CD4-positive, alpha-beta T cell (primary cell): ENCODE measurements at regions of chr11 and their contacts with region 1.

Region 1: DNA sequence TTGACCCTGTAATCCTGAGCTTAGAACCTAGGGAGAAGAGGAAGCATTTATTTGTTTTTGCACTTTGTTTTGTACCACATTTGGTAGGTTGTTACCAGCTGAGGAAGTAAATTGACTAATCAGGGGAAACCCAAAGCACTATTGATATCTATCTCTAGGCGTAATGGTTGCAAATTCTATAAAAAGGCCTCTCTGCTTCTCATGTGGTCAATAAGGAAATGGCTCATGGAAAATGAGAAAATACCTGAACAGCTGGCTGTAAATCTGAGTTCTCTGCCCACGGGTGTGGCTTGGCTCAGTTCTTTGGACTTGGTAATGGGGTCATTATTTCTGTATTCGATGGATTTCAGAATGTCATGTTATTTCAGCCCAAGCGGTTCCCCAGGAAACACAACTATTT is 42.4 kb downstream of the BARX2 start:
- DNase-seq: no peak
- ATAC-seq: no peak
- H3K4me3 ChIP-seq: no peak overlapping the region
- H3K4me3 Mint-ChIP-seq: no peak overlapping the region
- H3K27ac ChIP-seq: no peak overlapping the region
- H3K27ac Mint-ChIP-seq: no peak overlapping the region
- H3K4me1 ChIP-seq: no peaks in the 10 kb centered on the region
- H3K4me1 Mint-ChIP-seq: no peaks in the 10 kb centered on the region
- H3K27me3 ChIP-seq: no peaks in the 10 kb centered on the region
- H3K27me3 Mint-ChIP-seq: no peaks in the 10 kb centered on the region
- CTCF ChIP-seq: no peak

Region 2: GRCh38 chr11:128653801-128654231 is 764.2 kb before region 1 on chr11:
- CTCF ChIA-PET with region 1: no interaction called
- POLR2A ChIA-PET with region 1: no interaction called
- intact Hi-C with region 1: no loop called
- DNase-seq: peak in 1 of 14 experiments; percentile 29
- ATAC-seq: no peak
- H3K4me3 ChIP-seq: no peak overlapping the region
- H3K4me3 Mint-ChIP-seq: no peak overlapping the region
- H3K27ac ChIP-seq: no peak overlapping the region
- H3K27ac Mint-ChIP-seq: no peak overlapping the region
- H3K4me1 ChIP-seq: no peaks in the 10 kb centered on the region
- H3K4me1 Mint-ChIP-seq: no peaks in the 10 kb centered on the region
- H3K27me3 ChIP-seq: no peaks in the 10 kb centered on the region
- H3K27me3 Mint-ChIP-seq: no peaks in the 10 kb centered on the region
- CTCF ChIP-seq: no peak

Region 3: GRCh38 chr11:129352676-129353075 is 65.4 kb before region 1 on chr11:
- CTCF ChIA-PET with region 1: no interaction called
- POLR2A ChIA-PET with region 1: no interaction called
- intact Hi-C with region 1: loop called in 1 of 2 experiments (anchors 10 kb)
- DNase-seq: no peak
- ATAC-seq: no peak
- H3K4me3 ChIP-seq: no peak overlapping the region
- H3K4me3 Mint-ChIP-seq: no peak overlapping the region
- H3K27ac ChIP-seq: no peak overlapping the region
- H3K27ac Mint-ChIP-seq: no peak overlapping the region
- H3K4me1 ChIP-seq: no peaks in the 10 kb centered on the region
- H3K4me1 Mint-ChIP-seq: no peaks in the 10 kb centered on the region
- H3K27me3 ChIP-seq: peaks cover 0 to 4% of the 10 kb centered on the region in 2 experiments
- H3K27me3 Mint-ChIP-seq: no peaks in the 10 kb centered on the region
- CTCF ChIP-seq: no peak

Region 4: GRCh38 chr11:129639300-129639699 is 221.3 kb after region 1 on chr11:
- CTCF ChIA-PET with region 1: no interaction called
- POLR2A ChIA-PET with region 1: no interaction called
- intact Hi-C with region 1: no loop called
- DNase-seq: no peak
- ATAC-seq: no peak
- H3K4me3 ChIP-seq: no peak overlapping the region
- H3K4me3 Mint-ChIP-seq: no peak overlapping the region
- H3K27ac ChIP-seq: no peak overlapping the region
- H3K27ac Mint-ChIP-seq: no peak overlapping the region
- H3K4me1 ChIP-seq: peaks cover 5% of the 10 kb centered on the region
- H3K4me1 Mint-ChIP-seq: peaks cover 10% of the 10 kb centered on the region
- H3K27me3 ChIP-seq: no peaks in the 10 kb centered on the region
- H3K27me3 Mint-ChIP-seq: peaks cover 13% of the 10 kb centered on the region
- CTCF ChIP-seq: no peak

Region 5: DNA sequence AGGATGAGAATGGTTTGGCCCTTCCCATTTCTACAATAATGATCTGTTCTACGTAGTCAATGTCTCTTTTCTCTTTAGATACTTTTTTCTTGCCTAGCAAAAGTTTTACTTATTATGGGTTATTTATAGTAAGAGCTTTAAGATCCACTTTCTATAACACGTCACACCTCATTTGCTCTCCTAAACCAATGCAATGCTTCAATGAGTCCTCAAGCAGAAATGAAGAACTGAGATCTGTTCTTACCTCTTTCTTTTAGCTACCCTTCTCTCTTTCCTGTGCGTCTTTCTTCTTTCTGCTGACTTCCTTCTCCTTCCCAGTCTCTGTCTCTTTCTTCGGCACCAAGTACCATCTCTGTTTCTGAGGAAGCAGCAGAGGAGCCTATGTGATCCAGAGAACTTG is 1436.4 kb after region 1 on chr11:
- CTCF ChIA-PET with region 1: no interaction called
- POLR2A ChIA-PET with region 1: no interaction called
- intact Hi-C with region 1: loop called in 1 of 2 experiments (anchors 5 kb)
- DNase-seq: no peak
- ATAC-seq: no peak
- H3K4me3 ChIP-seq: no peak overlapping the region
- H3K4me3 Mint-ChIP-seq: no peak overlapping the region
- H3K27ac ChIP-seq: no peak overlapping the region
- H3K27ac Mint-ChIP-seq: no peak overlapping the region
- H3K4me1 ChIP-seq: no peaks in the 10 kb centered on the region
- H3K4me1 Mint-ChIP-seq: no peaks in the 10 kb centered on the region
- H3K27me3 ChIP-seq: no peaks in the 10 kb centered on the region
- H3K27me3 Mint-ChIP-seq: peaks cover 28% of the 10 kb centered on the region
- CTCF ChIP-seq: no peak